Thyroid gland (tissue), 4 donors: ENCODE measurements at regions of chr6 and their contacts with region 1.

Region 1: DNA sequence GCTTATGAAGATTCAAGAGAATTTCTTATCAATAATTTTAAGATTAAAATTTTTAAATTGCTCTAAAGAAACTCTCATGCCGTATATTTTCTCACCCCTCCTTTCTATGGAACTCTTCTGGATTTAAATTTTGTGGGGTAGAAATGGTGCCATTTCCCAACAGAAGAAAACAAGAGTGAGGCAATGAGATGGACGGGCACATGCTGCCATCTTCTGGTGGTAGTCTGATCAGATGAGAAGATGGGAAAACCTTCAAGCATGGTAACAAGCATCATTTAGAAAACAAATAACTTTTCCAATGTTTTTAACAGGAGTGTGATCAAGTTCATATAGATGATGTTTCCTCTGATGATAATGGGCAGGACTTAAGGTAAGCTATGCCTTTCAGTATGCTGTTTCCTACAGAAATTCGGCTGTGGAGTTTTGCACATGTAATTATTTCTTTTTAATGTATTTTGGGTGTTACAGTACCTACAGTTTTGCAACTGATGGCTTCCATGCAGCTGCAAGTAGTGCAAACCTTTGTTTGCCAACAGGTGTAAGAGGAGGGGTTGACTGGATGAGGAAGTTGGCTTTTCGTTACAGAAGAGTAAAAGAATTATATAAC is 271.4 kb downstream of the EYA4 start:
- DNase-seq: peak; percentile 52 to 68
- H3K4me3 ChIP-seq: no peak overlapping the region
- H3K27ac ChIP-seq: no peak overlapping the region
- H3K4me1 ChIP-seq: no peaks in the 10 kb centered on the region
- H3K27me3 ChIP-seq: no peaks in the 10 kb centered on the region
- CTCF ChIP-seq: peak; percentile 16 to 86 (median 72)
- POLR2A ChIP-seq: no peak

Region 2: DNA sequence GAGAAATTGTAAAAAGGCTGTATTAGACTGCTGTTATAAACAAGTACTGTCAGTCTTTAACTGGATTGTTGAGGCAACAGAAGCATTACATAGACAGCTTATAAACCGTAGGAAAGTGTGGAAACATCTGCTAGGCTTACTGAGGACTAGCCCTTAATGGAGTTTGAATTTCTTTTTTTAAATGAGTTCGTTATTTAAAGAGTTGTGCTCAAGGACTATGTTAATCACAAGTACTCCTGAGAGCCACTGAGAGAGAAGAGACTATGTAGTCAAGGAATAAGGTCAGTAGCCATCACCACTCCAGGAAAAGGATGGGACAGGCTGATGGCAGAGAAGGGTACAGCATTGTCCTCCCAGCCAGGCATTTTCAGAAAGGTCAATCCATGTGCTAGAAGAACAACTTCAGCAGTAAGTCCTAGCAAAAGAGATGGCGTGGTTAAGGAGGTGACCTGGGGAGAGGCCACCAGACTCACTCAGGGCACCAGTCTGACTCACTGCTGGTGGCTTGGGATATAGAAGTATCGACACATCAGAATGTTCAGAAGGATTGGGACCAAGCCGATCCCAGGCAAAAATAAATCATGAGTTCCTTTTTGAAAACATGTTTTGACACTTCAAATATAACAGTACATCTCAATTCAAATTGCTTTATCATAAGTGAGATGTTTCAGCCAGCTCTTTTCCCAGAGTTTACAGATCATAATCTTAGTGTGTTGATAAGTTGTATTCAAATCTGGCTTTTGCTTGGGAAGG is 691.7 kb before region 1 on chr6:
- intact Hi-C with region 1: loop called (anchors 5 kb)
- DNase-seq: no peak
- H3K4me3 ChIP-seq: no peak overlapping the region
- H3K27ac ChIP-seq: no peak overlapping the region
- H3K4me1 ChIP-seq: peaks cover 5 to 11% of the 10 kb centered on the region in 2 donors
- H3K27me3 ChIP-seq: no peaks in the 10 kb centered on the region
- CTCF ChIP-seq: no peak
- POLR2A ChIP-seq: no peak

Region 3: GRCh38 chr6:133184798-133185372 is 327.6 kb before region 1 on chr6:
- intact Hi-C with region 1: loop called (anchors 10 kb)
- DNase-seq: no peak
- H3K4me3 ChIP-seq: no peak overlapping the region
- H3K27ac ChIP-seq: no peak overlapping the region
- H3K4me1 ChIP-seq: no peaks in the 10 kb centered on the region
- H3K27me3 ChIP-seq: no peaks in the 10 kb centered on the region
- CTCF ChIP-seq: peak in 3 of 6 experiments; percentile 54 to 57 (median 57)
- POLR2A ChIP-seq: no peak